ENCODE measurements at regions of chr14 and their contacts with region 1.

Region 1: DNA sequence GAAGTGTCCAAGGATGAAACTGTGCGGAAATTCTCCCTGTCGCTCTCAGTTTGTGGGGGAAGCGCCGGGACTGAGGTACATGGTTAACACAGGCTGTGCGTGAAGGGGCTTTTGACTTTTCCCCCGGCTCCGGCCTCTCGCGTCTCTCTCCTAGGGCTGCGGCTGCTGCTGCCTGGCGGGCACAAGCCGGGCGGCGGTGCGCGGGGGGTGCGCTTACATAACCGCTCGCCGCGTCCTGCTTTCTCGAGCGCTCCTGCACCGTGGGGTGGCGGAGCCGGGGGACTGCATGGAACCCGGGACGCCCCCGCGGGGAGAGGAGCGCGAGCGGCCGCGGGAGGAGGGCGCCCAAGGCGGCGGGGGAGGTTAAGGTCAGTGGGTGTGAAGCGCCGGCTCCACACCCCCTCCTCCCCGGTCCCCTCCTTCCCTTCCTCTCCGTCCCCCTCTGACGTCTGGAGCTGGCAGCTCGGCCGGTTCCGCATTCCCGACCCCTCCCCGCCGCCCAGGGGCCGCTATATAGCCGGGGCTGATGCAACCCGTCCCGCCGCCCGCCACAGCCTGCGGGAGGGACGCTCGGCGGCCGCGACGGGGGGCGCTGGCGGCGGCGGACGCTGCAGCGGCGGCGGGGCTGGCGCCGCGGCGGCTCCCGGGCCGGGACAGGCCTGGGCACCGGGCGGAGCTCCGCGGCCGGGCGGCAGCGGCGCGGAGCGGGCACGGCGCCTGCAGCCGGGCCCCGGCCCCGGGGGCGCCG is at the start of gene JDP2:
- DNase-seq: peak; percentile 64 to 95
- H3K4me3 ChIP-seq: peak within 1 kb of the TSS; percentile 87 to 90
- H3K27ac ChIP-seq: peak within 1 kb of the TSS; percentile 78 to 84
- H3K4me1 ChIP-seq: peaks cover 17 to 30% of the 10 kb centered on the region in 2 donors
- H3K27me3 ChIP-seq: no peaks in the 10 kb centered on the region
- CTCF ChIP-seq: peak in 2 of 3 experiments; percentile 29 to 30
- total RNA-seq, gene JDP2: 213 TPM

Region 2: GRCh38 chr14:75176142-75176820 is 251.4 kb before region 1 on chr14 and contains the start of gene TMED10:
- intact Hi-C with region 1: loop called (anchors 5 kb)
- DNase-seq: peak; percentile 55 to 92
- H3K4me3 ChIP-seq: peak within 1 kb of the TSS; percentile 92 to 97
- H3K27ac ChIP-seq: peak within 1 kb of the TSS; percentile 99 to 100
- H3K4me1 ChIP-seq: peaks cover 0 to 15% of the 10 kb centered on the region in 2 donors
- H3K27me3 ChIP-seq: no peaks in the 10 kb centered on the region
- CTCF ChIP-seq: peak in 1 of 3 experiments; percentile 10
- total RNA-seq, gene TMED10: 190 TPM

Region 3: DNA sequence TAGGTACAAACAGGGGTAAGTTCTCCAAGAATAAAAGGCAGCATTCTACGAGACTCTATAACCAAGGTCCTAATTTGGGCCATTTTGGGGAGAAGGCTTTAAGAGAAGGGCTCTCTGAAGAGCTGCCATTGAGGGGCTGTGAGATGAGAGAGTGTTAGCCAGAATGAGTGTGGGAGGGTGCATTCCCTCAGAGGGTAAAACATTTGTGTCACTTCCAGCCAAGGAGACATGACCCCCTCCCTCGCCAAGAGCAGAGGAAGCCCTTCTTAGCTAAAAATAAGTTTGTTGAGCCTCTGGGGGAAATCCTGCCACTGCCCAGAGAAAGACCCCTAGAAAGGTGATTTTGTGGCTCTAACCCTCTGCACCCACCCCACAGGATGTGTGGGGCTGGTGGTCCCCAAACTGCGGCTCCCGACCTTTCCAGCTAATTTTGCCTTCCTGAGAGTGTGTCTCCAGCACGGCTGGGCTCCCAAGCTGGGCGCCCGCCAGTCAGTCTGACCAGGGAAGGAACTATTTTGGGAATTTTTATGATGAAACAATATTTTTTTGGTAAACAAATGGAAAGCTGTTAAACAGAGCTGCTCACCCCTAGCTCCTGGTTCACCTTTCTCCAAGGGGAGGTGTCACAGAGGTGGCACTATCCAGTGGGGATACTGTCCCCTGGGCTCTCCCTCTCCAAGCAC is 65.8 kb before region 1 on chr14:
- intact Hi-C with region 1: loop called (anchors 10 kb)
- DNase-seq: peak in 1 of 2 donors; percentile 73
- H3K4me3 ChIP-seq: peak overlapping the region in 1 of 2 donors; percentile 35
- H3K27ac ChIP-seq: peak overlapping the region; percentile 68 to 74
- H3K4me1 ChIP-seq: peaks cover 3 to 24% of the 10 kb centered on the region in 2 donors
- H3K27me3 ChIP-seq: no peaks in the 10 kb centered on the region
- CTCF ChIP-seq: no peak

Region 4: DNA sequence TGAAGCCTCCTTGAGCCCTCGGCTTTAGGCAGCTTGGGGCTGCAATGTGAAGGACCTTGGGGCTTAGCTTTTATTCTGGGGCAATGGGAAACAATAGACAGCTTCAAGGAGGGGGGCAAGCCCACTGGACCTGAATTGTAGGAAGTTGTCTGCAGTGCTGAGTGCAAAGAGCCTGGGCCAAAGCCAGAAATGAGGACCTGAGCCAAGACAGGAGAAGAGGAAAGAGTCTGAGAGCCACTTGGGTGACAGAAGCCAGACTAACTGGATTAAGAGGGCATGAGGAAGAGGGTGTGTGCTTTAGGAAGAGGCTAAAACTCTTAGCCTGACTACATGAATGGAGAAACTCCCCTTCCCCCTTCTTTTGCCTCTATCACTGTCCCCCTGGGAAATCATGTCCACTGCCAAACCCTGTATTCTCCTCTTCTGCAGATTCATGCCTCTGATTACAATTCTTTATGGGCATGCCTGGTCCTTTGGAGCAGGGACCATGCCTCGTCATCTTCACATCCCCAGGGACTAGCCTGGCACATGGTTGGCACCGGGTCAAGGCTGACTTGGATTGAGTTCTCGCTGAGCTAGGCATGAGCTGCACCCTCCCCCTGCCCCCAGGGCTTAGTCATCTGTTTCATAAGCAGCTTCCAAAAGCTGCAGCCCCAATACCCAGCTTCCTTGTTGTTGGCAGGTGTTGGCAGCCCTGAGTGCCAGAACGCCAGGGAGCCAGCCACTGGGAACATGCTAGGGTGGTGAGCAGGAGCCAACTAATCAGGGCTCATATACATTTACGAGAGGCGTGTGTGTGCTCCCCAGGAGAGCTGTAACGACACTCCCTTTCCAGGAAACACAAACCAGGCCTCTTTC is 27.6 kb before region 1 on chr14:
- intact Hi-C with region 1: loop called (anchors 1 kb)
- DNase-seq: peak; percentile 93 to 99
- H3K4me3 ChIP-seq: peak overlapping the region in 1 of 2 donors; percentile 27
- H3K27ac ChIP-seq: peak overlapping the region; percentile 43 to 66
- H3K4me1 ChIP-seq: peaks cover 9 to 17% of the 10 kb centered on the region in 2 donors
- H3K27me3 ChIP-seq: no peaks in the 10 kb centered on the region
- CTCF ChIP-seq: no peak

Region 5: GRCh38 chr14:75452900-75453747 is 25.5 kb after region 1 on chr14:
- intact Hi-C with region 1: loop called (anchors 2 kb)
- DNase-seq: peak in 1 of 2 donors; percentile 81
- H3K4me3 ChIP-seq: peak overlapping the region in 1 of 2 donors; percentile 8
- H3K27ac ChIP-seq: peak overlapping the region; percentile 69 to 85
- H3K4me1 ChIP-seq: peaks cover 40 to 78% of the 10 kb centered on the region in 2 donors
- H3K27me3 ChIP-seq: no peaks in the 10 kb centered on the region
- CTCF ChIP-seq: no peak

Region 6: DNA sequence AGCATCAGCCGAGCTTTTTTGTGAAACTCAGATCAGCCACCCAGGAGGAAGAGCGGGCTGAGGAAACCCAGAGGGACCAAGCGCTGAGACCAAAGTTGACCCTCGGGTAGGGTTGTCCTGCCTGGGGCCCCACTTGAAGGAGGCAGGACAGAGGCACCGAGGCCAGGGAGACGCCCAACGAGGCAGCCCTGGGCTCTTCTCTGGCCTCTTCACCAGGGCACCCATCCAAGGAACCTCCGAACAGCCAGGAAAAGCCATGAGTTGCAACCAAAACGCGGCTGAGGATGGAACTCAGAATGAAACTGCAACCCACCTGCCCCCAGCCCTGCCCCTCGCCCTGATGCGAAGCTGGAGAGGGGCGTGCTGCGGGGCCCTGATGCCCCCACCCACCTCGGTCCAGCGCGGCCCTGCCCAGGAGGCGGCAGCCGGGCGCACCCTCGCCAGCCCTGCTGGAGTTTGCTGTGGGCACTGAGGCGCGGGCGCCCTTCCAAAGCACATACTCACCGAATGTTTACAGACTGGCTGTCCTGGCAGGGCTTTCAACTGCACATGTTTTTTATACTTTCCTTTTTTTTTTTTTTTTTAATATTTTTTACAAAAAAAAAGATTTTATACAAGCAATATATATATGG is 42.1 kb after region 1 on chr14:
- intact Hi-C with region 1: loop called (anchors 2 kb)
- DNase-seq: peak in 1 of 2 donors; percentile 86
- H3K4me3 ChIP-seq: peak overlapping the region in 1 of 2 donors; percentile 26
- H3K27ac ChIP-seq: peak overlapping the region; percentile 46 to 64
- H3K4me1 ChIP-seq: peaks cover 5 to 26% of the 10 kb centered on the region in 2 donors
- H3K27me3 ChIP-seq: no peaks in the 10 kb centered on the region
- CTCF ChIP-seq: peak in 1 of 3 experiments; percentile 25

Region 7: DNA sequence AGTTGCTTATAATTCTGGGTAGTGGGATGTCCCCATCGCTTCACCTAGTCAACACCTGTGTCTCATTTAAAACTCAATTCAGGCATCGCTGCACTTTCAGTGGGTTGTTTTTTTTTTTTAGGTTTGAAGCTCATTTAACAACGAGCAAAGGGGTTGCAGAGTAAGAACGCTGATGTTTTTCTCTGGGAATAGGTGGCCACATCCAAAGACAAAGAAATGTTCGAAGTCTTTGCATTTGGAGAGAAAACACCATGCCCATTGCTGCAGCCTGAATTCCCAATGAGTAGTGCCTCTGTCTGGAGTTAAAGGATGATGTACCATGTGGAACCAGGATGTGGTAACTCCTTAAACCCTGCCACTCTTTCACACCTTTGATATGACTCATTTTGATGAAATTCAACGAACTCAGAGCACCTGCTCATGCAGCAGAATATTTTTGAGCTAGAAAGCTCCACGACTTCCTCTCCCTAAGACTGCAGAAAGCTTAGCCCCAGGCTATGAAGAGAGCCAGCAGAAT is 59.6 kb after region 1 on chr14:
- intact Hi-C with region 1: loop called (anchors 5 kb)
- DNase-seq: no peak
- H3K4me3 ChIP-seq: no peak overlapping the region
- H3K27ac ChIP-seq: no peak overlapping the region
- H3K4me1 ChIP-seq: no peaks in the 10 kb centered on the region
- H3K27me3 ChIP-seq: no peaks in the 10 kb centered on the region
- CTCF ChIP-seq: no peak

Measured in ascending aorta (tissue), 2 donors.